Activated CD4-positive, alpha-beta T cell treated with anti-CD3 and anti-CD28 coated beads for 36 hours (primary cell): ENCODE measurements at regions of chr3 and their contacts with region 1.

Region 1: GRCh38 chr3:152430223-152431002 is 161.7 kb downstream of the MBNL1 start:
- DNase-seq: no peak
- ATAC-seq: no peak
- H3K4me3 Mint-ChIP-seq: no peak overlapping the region
- H3K27ac Mint-ChIP-seq: peak overlapping the region; percentile 34
- H3K4me1 Mint-ChIP-seq: peaks cover 51% of the 10 kb centered on the region
- H3K27me3 Mint-ChIP-seq: no peaks in the 10 kb centered on the region

Region 2: GRCh38 chr3:152183473-152183872 is 246.9 kb before region 1 on chr3:
- CTCF ChIA-PET with region 1: no interaction called
- POLR2A ChIA-PET with region 1: no interaction called
- intact Hi-C with region 1: no loop called
- DNase-seq: peak; percentile 72
- ATAC-seq: peak; percentile 87
- H3K4me3 Mint-ChIP-seq: peak overlapping the region; percentile 6
- H3K27ac Mint-ChIP-seq: peak overlapping the region; percentile 71
- H3K4me1 Mint-ChIP-seq: peaks cover 67% of the 10 kb centered on the region
- H3K27me3 Mint-ChIP-seq: no peaks in the 10 kb centered on the region

Region 3: DNA sequence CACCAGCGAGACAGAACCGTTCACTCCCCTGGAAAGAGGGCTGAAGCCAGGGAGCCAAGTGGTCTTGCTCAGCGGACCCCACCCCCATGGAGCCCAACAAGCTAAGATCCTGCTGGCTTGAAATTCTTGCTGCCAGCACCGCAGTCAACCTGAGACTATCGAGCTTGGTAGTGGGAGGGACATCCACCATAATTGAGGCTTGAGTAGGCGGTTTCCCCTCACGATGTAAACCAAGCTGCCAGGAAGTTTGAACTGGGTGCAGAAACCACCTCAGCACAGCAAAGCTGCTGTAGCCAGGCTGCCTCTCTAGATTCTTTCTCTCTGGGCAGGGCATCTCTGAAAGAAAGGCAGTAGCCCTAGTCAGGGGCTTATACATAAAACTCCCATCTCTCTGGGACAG is 10.7 kb before region 1 on chr3:
- CTCF ChIA-PET with region 1: interaction called, 10 read pairs
- POLR2A ChIA-PET with region 1: no interaction called
- intact Hi-C with region 1: no loop called
- DNase-seq: peak; percentile 67
- ATAC-seq: peak; percentile 89
- H3K4me3 Mint-ChIP-seq: no peak overlapping the region
- H3K27ac Mint-ChIP-seq: peak overlapping the region; percentile 88
- H3K4me1 Mint-ChIP-seq: peaks cover 77% of the 10 kb centered on the region
- H3K27me3 Mint-ChIP-seq: no peaks in the 10 kb centered on the region

Region 4: DNA sequence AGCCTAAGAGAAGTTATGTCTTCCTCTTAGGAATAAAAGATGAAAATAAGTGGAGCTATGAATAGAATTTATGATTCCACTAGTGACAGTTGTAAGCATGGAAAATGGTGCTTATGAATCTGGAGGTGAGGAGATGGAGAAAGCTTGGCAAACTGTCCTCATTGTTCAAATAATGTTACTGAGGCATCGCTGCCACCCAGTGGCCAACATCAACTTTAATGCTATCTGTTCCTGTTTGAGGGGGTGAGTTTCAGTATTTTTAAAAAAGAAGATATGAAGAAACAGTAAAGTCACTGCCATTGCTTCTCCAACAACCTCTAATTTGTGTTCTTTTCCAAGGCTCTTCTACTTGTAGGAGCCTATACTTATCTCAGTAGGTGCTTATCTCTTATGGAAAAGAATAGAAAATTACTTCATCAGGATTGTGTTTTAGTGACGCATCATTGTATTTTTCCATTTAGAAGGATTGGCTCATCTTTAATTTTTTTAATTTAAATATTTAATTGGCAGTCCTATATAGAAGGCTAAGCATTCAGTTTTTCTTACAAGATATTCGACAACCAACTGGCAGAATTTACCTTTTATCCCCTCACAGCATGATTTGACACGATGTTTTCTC is 144.2 kb after region 1 on chr3:
- CTCF ChIA-PET with region 1: no interaction called
- POLR2A ChIA-PET with region 1: no interaction called
- intact Hi-C with region 1: no loop called
- DNase-seq: peak; percentile 65
- ATAC-seq: no peak
- H3K4me3 Mint-ChIP-seq: no peak overlapping the region
- H3K27ac Mint-ChIP-seq: no peak overlapping the region
- H3K4me1 Mint-ChIP-seq: no peaks in the 10 kb centered on the region
- H3K27me3 Mint-ChIP-seq: peaks cover 3% of the 10 kb centered on the region

Region 5: DNA sequence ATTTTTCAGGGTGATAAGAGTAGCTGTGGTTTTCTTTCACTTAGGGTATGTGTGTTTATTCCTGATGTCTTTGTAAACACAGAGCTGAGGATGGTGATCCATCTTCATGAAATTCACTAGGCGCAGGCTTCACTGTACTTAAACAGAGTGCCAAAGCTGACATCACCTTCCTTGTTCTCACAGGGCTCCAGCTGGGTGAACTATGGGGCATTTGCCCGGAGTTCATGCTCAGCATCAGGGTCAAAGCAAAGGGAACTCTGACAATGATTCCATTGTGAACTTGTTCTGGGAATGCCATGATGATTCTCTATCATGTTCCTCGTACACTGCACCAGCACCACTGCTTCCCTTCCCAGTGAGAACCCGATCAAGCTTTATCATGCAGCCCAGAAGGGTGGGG is 219.8 kb after region 1 on chr3:
- CTCF ChIA-PET with region 1: no interaction called
- POLR2A ChIA-PET with region 1: no interaction called
- intact Hi-C with region 1: no loop called
- DNase-seq: no peak
- ATAC-seq: no peak
- H3K4me3 Mint-ChIP-seq: no peak overlapping the region
- H3K27ac Mint-ChIP-seq: no peak overlapping the region
- H3K4me1 Mint-ChIP-seq: no peaks in the 10 kb centered on the region
- H3K27me3 Mint-ChIP-seq: peaks cover 1% of the 10 kb centered on the region

Region 6: DNA sequence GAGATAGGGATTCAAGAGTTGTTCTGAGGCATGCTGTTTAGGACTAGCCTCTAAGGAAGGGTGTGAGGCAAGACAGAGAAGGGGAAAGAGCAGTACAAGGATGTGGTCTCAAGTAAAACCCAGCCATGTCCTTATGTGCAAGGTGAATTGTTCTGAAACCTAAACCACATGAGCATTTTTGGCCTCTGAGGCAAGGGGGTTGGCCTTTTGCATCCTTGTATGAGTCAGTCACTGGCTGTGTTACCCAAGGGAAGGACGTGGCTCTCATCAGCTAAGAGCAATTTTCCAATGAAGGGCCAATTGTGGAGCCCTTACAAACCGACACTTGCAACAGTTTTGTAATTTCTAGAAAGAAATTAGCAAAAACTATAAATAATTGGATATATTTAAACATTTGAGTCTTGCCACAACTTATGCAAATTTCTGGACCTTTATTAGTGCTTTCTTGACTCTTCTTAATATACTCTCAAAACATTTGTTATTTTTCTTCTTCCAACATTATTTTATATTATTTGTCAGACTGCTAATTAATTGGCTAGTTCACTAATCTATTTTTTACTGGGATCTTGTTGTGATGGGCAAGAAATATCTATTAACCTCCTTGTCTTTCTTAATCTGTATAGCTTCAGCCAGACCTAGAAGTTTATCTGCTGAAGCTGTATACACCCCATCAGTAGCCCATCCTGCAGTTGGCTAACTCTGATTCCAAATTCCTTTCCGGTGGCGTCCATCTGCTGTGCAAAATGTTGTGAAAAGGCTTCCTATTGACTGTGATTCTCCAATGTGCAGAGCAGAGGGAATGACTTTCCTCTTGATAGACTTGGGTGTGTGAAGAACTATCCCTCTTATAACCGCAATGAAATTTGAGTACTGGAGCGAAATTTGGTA is 306.9 kb after region 1 on chr3:
- CTCF ChIA-PET with region 1: no interaction called
- POLR2A ChIA-PET with region 1: no interaction called
- intact Hi-C with region 1: no loop called
- DNase-seq: peak; percentile 6
- ATAC-seq: peak; percentile 64
- H3K4me3 Mint-ChIP-seq: no peak overlapping the region
- H3K27ac Mint-ChIP-seq: no peak overlapping the region
- H3K4me1 Mint-ChIP-seq: no peaks in the 10 kb centered on the region
- H3K27me3 Mint-ChIP-seq: no peaks in the 10 kb centered on the region